H1 (cell line): ENCODE measurements at regions of chr12 and their contacts with region 1.

Region 1: GRCh38 chr12:113135178-113136127 is at the start of gene RASAL1:
- DNase-seq: peak; percentile 70 to 99
- H3K4me3 ChIP-seq: peak within 1 kb of the TSS; percentile 39 to 62 (median 50)
- H3K27ac ChIP-seq: no peak within 1 kb of the TSS
- H3K4me1 ChIP-seq: peaks cover 0 to 13% (median 9%) of the 10 kb centered on the region in 4 experiments; a peak in 6 of 7 replicates
- H3K27me3 ChIP-seq: peaks cover 0 to 13% (median 6%) of the 10 kb centered on the region in 4 experiments; a peak in 5 of 7 replicates
- CTCF ChIP-seq: peak; percentile 64 to 86 (median 84)
- EP300 ChIP-seq: no peak
- POLR2A ChIP-seq: 0 out of 3 replicates have a peak, but pooled peaks of 1 of the 2 experiments have one; percentile 25
- RAD21 ChIP-seq: peak in 1 of 2 experiments; percentile 39; a peak in 2 of 4 replicates
- total RNA-seq, gene RASAL1: 5.0 and 6.4 TPM in 2 replicates

Region 2: GRCh38 chr12:113073586-113073985 is 61.9 kb before region 1 on chr12:
- CTCF ChIA-PET with region 1: no interaction called
- POLR2A ChIA-PET with region 1: no interaction called
- DNase-seq: no peak
- H3K4me3 ChIP-seq: no peak overlapping the region
- H3K27ac ChIP-seq: no peak overlapping the region
- H3K4me1 ChIP-seq: peaks cover 0 to 7% (median 3%) of the 10 kb centered on the region in 4 experiments; a peak in 3 of 7 replicates
- H3K27me3 ChIP-seq: peaks cover 15 to 20% (median 19%) of the 10 kb centered on the region in 4 experiments
- CTCF ChIP-seq: no peak
- EP300 ChIP-seq: no peak
- POLR2A ChIP-seq: no peak
- RAD21 ChIP-seq: no peak

Region 3: GRCh38 chr12:113114447-113115178 is 20.8 kb before region 1 on chr12:
- CTCF ChIA-PET with region 1: interaction called, 36 read pairs
- POLR2A ChIA-PET with region 1: interaction called, 13 read pairs
- DNase-seq: no peak
- H3K4me3 ChIP-seq: no peak overlapping the region
- H3K27ac ChIP-seq: no peak overlapping the region
- H3K4me1 ChIP-seq: no peaks in the 10 kb centered on the region
- H3K27me3 ChIP-seq: no peaks in the 10 kb centered on the region
- CTCF ChIP-seq: no peak
- EP300 ChIP-seq: no peak
- POLR2A ChIP-seq: no peak
- RAD21 ChIP-seq: no peak

Region 4: DNA sequence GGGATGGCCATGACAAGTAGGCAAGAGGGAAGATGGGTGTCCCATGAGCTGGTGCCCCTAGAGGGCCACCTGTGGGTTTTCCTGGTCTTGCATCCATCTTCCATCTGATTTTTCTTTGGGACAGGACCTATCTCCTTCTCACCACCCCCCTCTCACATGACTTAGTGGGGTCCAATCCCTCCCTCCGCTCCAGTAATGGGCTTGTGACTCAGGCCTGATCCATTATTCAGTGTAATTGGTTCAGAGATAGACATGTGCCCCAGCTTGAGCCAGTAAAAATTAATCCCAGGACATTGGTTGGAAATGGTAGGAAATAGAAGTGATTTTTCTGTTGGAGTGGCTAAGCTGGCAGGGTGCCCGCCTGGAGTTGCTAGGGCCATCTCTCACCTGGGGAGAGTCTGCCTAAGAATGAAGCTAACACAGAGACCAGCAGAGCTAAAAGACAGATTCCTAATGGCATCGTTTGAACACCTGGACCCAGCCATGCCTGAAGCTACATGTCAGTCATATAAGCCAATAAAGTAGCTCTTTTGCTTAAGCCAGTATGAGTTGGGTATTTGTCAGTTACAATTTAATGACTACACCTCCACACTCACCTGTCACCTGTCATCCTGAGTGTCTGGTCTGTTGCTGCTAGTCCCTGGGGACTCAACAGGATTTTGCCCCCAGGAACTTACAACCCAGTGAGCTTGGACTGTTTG is 14.6 kb before region 1 on chr12:
- CTCF ChIA-PET with region 1: interaction called, 36 read pairs
- POLR2A ChIA-PET with region 1: interaction called, 13 read pairs
- DNase-seq: no peak
- H3K4me3 ChIP-seq: no peak overlapping the region
- H3K27ac ChIP-seq: no peak overlapping the region
- H3K4me1 ChIP-seq: no peaks in the 10 kb centered on the region
- H3K27me3 ChIP-seq: peaks cover 0 to 2% (median 0%) of the 10 kb centered on the region in 4 experiments; a peak in 1 of 7 replicates
- CTCF ChIP-seq: no peak
- EP300 ChIP-seq: no peak
- POLR2A ChIP-seq: no peak
- RAD21 ChIP-seq: no peak

Region 5: DNA sequence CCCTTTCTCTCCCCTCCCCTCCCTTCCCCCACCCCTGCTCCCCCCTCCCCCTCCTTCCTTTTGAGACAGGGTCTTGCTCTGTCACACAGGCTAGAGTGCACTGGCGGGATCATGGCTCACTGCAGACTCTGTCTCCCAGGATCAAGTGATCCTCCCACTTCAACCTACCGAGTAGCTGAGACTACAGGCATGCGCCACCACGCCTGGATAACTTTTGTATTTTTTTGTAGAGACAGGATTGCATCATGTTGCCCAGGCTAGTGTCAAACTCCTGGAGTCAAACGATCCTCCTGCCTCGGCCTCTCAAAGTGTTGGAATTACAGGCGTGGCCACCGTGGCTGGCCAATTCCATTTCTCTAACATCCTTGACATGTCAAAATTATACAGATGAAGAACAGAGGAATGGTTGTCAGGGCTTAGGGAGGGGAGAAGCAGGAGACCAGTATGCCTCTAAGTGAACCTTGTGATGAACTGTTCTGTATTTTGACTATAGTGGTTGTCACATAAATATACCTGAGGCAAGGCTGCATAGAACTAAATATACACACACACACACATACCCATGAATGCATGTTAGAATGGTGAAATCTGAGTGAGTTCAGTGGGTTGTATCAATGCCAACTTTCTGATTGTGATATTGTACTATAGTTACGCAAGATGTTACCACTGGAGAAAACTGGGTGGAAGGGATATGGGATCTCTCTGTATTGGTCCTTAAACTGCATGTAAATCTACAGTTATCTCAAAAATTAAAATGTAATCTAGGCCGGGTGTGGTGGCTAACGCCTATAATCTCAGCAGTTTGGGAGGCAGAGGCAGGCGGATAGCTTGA is 10.5 kb after region 1 on chr12:
- CTCF ChIA-PET with region 1: interaction called, 51 read pairs
- POLR2A ChIA-PET with region 1: interaction called, 12 read pairs
- DNase-seq: no peak
- H3K4me3 ChIP-seq: no peak overlapping the region
- H3K27ac ChIP-seq: no peak overlapping the region
- H3K4me1 ChIP-seq: peaks cover 4 to 20% (median 13%) of the 10 kb centered on the region in 4 experiments
- H3K27me3 ChIP-seq: peaks cover 0 to 3% (median 2%) of the 10 kb centered on the region in 4 experiments; a peak in 3 of 7 replicates
- CTCF ChIP-seq: no peak
- EP300 ChIP-seq: no peak
- POLR2A ChIP-seq: no peak
- RAD21 ChIP-seq: no peak

Region 6: GRCh38 chr12:113152835-113153814 is 17.7 kb after region 1 on chr12:
- CTCF ChIA-PET with region 1: interaction called, 51 read pairs
- POLR2A ChIA-PET with region 1: interaction called, 35 read pairs
- DNase-seq: peak; percentile 51 to 86
- H3K4me3 ChIP-seq: peak overlapping the region; percentile 29 to 59 (median 50)
- H3K27ac ChIP-seq: no peak overlapping the region
- H3K4me1 ChIP-seq: peaks cover 7 to 23% (median 19%) of the 10 kb centered on the region in 4 experiments
- H3K27me3 ChIP-seq: peaks cover 1 to 34% (median 26%) of the 10 kb centered on the region in 4 experiments
- CTCF ChIP-seq: peak; percentile 53 to 61 (median 60)
- EP300 ChIP-seq: no peak
- POLR2A ChIP-seq: no peak
- RAD21 ChIP-seq: peak; percentile 64 to 74

Region 7: DNA sequence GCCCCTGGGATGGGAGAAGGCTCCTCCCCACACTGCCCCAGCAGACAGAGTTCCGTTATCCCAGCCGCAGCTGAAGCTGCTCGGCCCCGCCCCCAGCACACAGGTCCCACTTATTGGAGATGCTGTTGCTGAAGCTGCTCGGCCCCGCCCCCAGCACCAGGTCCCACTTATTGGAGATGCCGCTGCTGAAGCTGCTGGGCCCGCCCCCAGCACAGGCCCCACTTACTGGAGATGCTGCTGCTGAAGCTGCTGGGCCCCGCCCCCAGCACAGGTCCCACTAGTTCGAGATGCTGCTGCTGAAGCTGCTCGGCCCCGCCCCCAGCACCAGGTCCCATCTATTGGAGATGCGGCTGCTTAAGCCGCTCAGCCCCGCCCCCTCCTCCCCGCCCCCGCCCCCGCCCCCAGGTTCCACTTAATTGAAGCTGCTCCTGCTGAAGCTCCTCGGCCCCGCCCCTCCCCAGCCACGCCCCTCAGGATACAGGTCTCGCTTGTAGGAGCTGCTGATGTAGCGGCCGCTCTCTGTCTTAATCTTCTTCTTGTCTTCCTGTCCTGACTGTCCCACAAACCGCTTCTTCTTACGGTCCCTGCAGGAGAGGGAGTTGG is 26.1 kb after region 1 on chr12:
- CTCF ChIA-PET with region 1: interaction called, 43 read pairs
- POLR2A ChIA-PET with region 1: interaction called, 4 read pairs
- DNase-seq: peak; percentile 95 to 98
- H3K4me3 ChIP-seq: no peak overlapping the region
- H3K27ac ChIP-seq: no peak overlapping the region
- H3K4me1 ChIP-seq: peaks cover 5 to 13% (median 9%) of the 10 kb centered on the region in 4 experiments
- H3K27me3 ChIP-seq: no peaks in the 10 kb centered on the region
- CTCF ChIP-seq: no peak
- EP300 ChIP-seq: no peak
- POLR2A ChIP-seq: no peak
- RAD21 ChIP-seq: no peak

Region 8: DNA sequence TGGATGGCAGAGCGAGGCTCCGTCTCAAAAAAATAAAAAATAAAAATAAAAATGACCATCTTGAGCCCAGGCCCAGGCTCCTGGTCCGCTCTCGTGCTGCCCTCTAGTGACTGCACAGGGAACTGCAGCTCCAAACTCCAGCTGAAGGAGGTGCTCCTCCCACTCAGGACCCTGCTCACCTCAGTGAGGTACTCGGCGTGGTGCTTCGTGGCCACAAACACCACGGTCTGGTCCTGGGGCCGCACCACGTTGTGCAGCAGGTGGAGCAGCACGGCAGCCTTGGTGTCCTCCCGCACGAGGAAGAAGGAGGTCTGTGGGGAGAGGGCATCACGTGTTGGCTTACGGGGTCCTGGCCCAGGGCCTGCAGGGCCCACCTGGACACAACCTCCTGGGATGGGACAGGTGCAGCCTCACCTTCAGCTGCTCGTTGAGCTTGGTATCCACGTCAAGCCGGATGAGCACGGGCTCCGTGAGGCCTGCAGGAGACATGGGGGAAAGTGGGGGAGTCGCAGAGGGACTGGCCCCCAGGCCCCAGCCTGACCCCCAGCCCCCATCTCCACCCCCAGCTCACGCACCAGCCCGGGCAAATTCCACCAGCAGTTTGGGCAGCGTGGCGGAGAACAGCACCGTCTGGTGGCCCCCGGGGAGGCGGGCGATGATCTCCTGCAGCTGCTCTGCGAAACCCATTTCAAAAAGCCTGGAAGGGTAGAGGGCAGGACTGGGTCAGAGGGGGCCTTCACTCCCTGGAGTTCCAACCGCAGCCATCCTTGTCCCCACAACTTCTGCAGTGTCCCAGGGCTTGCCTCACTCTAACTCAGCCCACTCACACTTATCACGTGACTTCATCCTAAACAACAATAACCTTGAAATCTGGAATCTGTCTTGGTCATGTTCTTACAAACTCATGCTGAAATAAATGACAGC is 39.3 kb after region 1 on chr12:
- CTCF ChIA-PET with region 1: interaction called, 67 read pairs
- POLR2A ChIA-PET with region 1: interaction called, 3 read pairs
- DNase-seq: peak in 1 of 2 experiments; percentile 96
- H3K4me3 ChIP-seq: no peak overlapping the region
- H3K27ac ChIP-seq: no peak overlapping the region
- H3K4me1 ChIP-seq: no peaks in the 10 kb centered on the region
- H3K27me3 ChIP-seq: no peaks in the 10 kb centered on the region
- CTCF ChIP-seq: peak; percentile 88 to 97 (median 95)
- EP300 ChIP-seq: no peak
- POLR2A ChIP-seq: no peak
- RAD21 ChIP-seq: peak; percentile 86 to 89

Region 9: DNA sequence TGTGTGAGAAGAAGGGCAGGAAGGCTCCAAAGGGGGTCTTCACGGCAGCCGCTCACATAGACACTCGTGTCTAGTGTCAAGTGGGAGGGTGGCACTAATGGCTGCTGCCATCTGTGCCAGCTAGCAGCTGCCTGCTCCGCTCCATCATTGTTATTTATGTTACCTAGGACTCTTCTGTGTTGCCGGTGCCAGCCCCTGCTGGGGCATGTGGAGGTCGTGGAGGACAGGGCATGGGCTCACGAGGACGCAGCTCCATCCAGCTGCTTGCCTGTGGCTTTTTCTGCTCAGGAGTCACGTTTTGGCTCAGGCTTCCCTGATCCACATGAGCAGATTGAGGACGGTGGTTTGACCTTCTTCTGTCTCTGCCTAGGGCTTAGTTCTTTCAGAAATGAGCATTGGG is 117.0 kb after region 1 on chr12:
- CTCF ChIA-PET with region 1: no interaction called
- POLR2A ChIA-PET with region 1: no interaction called
- DNase-seq: no peak
- H3K4me3 ChIP-seq: no peak overlapping the region
- H3K27ac ChIP-seq: no peak overlapping the region
- H3K4me1 ChIP-seq: peaks cover 0 to 5% (median under 1%) of the 10 kb centered on the region in 4 experiments; a peak in 4 of 7 replicates
- H3K27me3 ChIP-seq: no peaks in the 10 kb centered on the region
- CTCF ChIP-seq: no peak
- EP300 ChIP-seq: no peak
- POLR2A ChIP-seq: no peak
- RAD21 ChIP-seq: no peak